Tibial artery (tissue), 4 donors: ENCODE measurements at regions of chr20 and their contacts with region 1.

Region 1: DNA sequence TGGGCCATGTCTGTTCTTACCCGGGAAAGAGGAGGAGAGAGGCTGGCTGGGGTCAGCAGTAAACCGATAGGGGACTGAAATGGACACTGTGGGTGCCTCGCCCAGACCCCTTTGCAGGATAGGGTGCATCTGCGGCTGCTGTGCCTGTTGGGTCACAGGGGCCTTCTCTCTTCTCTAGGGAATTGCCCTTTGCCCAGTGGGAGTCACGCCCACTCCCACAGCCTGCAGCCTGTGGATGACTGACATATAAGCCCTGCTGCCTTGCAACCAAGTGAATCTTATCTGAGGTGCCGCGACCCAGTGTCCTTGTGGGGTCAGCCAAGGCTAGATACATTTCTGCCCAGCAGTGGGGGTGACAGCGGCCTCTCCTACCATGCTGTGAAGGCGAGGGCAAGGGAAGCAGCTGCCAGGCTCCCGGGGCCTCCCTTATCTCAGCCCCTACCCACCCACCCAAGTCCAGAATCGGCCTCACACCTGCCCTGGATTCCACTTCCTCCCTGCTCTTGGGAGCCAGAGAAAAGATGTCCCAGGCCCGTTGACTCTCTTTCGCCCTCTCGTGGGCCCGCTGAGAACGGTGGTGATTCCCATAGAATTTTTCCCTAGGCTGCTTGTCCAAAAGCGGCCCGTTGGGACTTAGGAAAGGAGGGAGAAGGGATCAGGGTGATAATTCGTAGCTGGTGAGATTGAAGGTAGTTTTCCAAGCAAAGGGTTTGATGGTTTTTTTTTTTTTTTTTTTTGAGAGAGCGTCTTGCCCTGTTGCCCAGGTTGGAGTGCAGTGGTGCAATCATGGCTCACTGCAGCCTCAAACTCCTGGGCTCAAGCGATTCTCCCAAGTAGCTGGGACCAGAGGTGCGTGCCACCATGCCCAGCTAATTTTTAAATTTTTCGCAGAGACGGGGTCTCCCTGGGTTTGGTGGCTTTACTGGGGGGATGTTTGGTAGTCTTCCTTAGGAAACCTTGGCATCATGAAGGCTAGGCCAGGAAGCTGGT is 76.4 kb upstream of the RNF24 start:
- DNase-seq: no peak
- H3K4me3 ChIP-seq: no peak overlapping the region
- H3K27ac ChIP-seq: no peak overlapping the region
- H3K4me1 ChIP-seq: peaks cover 0 to 13% (median 3%) of the 10 kb centered on the region in 4 donors
- H3K27me3 ChIP-seq: no peaks in the 10 kb centered on the region
- CTCF ChIP-seq: peak; percentile 53 to 72

Region 2: GRCh38 chr20:3786665-3787323 is 305.0 kb before region 1 on chr20 and contains the start of gene CENPB:
- intact Hi-C with region 1: loop called (anchors 5 kb)
- DNase-seq: peak; percentile 87 to 94
- H3K4me3 ChIP-seq: peak within 1 kb of the TSS; percentile 56 to 85
- H3K27ac ChIP-seq: peak within 1 kb of the TSS; percentile 82 to 85
- H3K4me1 ChIP-seq: peaks cover 0 to 38% (median 35%) of the 10 kb centered on the region in 4 donors
- H3K27me3 ChIP-seq: no peaks in the 10 kb centered on the region
- CTCF ChIP-seq: peak; percentile 73 to 80

Region 3: GRCh38 chr20:3888622-3889488 is 202.9 kb before region 1 on chr20 and contains the start of gene PANK2:
- intact Hi-C with region 1: loop called (anchors 2 kb)
- DNase-seq: peak; percentile 99 to 100
- H3K4me3 ChIP-seq: peak within 1 kb of the TSS; percentile 95 to 100
- H3K27ac ChIP-seq: peak within 1 kb of the TSS; percentile 94 to 97
- H3K4me1 ChIP-seq: peaks cover 0 to 46% (median 33%) of the 10 kb centered on the region in 4 donors
- H3K27me3 ChIP-seq: no peaks in the 10 kb centered on the region
- CTCF ChIP-seq: peak; percentile 69 to 77

Region 4: DNA sequence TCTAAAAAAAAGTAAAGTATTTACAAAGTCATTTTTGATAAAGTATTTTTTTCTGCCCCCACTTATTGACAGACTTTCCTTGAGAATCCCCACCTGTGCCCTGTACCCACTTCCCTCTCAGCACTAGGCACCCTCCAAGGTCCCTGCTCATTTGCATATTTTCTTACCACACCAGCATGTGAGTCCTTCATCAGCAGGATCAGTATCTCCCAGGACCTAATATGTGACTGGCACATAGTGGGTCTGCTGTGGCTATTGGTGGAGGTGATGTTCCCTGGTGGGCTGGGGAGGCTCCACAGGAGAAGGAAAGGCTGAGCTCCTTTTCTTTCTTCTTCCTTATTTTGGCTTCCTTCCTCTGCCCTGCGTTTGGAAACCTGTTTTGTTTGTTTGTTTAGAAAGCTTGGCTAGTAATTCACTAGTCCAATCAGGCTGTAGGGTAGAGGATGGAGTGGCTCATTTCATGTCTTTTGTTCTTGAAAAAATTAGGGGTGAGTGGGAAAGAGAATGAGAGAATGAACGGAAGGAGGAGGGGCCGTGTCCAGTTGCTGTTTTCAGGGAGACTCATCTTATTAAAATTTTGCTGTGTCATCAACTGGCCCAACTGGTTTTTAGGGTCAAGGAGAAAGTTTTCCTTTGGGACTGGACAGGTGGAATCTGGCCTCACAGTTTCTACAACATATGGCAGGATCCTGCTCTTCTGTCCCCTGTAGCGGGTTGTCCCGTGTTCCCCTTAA is 73.6 kb before region 1 on chr20:
- intact Hi-C with region 1: loop called (anchors 5 kb)
- DNase-seq: no peak
- H3K4me3 ChIP-seq: no peak overlapping the region
- H3K27ac ChIP-seq: no peak overlapping the region
- H3K4me1 ChIP-seq: peaks cover 0 to 28% (median 20%) of the 10 kb centered on the region in 4 donors
- H3K27me3 ChIP-seq: no peaks in the 10 kb centered on the region
- CTCF ChIP-seq: no peak

Region 5: DNA sequence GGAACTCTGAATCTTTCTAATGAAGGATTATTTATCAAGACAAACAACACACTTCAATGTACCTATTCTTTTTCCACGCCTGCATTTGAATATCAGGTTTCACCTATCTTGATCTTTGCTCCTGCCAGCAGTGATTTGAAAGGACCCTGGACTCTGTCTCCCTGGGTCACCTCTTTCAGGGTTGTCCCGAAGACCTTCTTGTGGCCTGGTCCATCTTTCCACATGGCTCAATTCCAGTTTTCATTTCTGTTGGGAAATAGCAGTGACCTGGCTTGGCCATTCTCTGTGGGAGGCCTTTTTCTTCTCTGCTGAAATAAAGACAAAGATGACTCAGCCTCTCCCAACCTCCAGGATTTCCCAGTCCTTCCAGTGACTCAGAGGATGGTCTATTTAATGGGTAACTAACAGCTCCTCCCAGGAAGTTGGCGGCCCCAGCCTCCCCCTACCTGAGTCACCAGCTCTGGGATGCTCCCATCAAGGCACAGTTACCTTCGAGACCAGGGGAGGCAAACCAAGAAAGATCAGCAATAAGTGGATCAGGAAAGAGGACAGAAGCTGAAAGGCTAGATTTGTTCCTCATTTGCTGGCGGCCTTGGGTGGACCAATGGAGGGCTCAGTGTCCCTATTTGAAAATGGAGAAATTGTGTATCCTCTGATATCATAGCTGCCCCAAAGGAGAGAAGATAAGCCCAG is 43.7 kb after region 1 on chr20:
- intact Hi-C with region 1: no loop called
- DNase-seq: no peak
- H3K4me3 ChIP-seq: no peak overlapping the region
- H3K27ac ChIP-seq: no peak overlapping the region
- H3K4me1 ChIP-seq: no peaks in the 10 kb centered on the region
- H3K27me3 ChIP-seq: peaks cover 0 to 25% of the 10 kb centered on the region in 2 donors
- CTCF ChIP-seq: no peak